Activated CD4-positive, alpha-beta T cell treated with anti-CD3 and anti-CD28 coated beads, Interleukin-2, amount 10 ng/mL, durations not matched to agents 24 days and 14 days (primary cell): ENCODE measurements at regions of chr2 and their contacts with region 1.

Region 1: GRCh38 chr2:101387151-101387807 is at the start of gene CREG2:
- DNase-seq: peak; percentile 90
- H3K4me3 Mint-ChIP-seq: peak within 1 kb of the TSS; percentile 71
- H3K27ac Mint-ChIP-seq: no peak within 1 kb of the TSS
- H3K4me1 Mint-ChIP-seq: peaks cover 5% of the 10 kb centered on the region
- H3K27me3 Mint-ChIP-seq: peaks cover 73% of the 10 kb centered on the region
- total RNA-seq, gene CREG2: not detected in 2 replicates

Region 2: GRCh38 chr2:101341901-101342624 is 45.2 kb before region 1 on chr2:
- intact Hi-C with region 1: loop called (anchors 5 kb)
- DNase-seq: peak; percentile 91
- H3K4me3 Mint-ChIP-seq: no peak overlapping the region
- H3K27ac Mint-ChIP-seq: peak overlapping the region; percentile 52
- H3K4me1 Mint-ChIP-seq: peaks cover 26% of the 10 kb centered on the region
- H3K27me3 Mint-ChIP-seq: peaks cover 5% of the 10 kb centered on the region

Region 3: GRCh38 chr2:101356521-101356920 is 30.8 kb before region 1 on chr2:
- intact Hi-C with region 1: no loop called
- DNase-seq: no peak
- H3K4me3 Mint-ChIP-seq: no peak overlapping the region
- H3K27ac Mint-ChIP-seq: no peak overlapping the region
- H3K4me1 Mint-ChIP-seq: peaks cover 15% of the 10 kb centered on the region
- H3K27me3 Mint-ChIP-seq: peaks cover 5% of the 10 kb centered on the region

Region 4: DNA sequence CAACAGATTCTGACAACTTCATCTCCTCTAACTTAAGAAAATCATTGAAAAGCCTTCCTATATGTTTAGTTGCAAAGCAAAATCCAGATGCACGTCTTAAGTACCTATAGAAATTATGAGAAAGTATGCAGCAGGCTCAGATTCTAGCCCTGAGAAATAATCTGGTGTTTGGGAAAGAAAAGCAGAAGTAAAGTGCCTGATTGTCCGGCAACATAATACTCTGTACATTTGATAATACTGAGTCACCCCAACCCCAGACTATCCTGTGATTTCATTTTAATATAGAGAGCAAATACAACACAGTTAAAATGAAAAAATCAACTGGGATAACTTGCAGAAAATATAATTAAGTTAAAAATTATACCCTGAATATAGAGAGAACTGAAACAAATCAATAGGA is 74.1 kb after region 1 on chr2:
- intact Hi-C with region 1: no loop called
- DNase-seq: no peak
- H3K4me3 Mint-ChIP-seq: no peak overlapping the region
- H3K27ac Mint-ChIP-seq: no peak overlapping the region
- H3K4me1 Mint-ChIP-seq: peaks cover 8% of the 10 kb centered on the region
- H3K27me3 Mint-ChIP-seq: no peaks in the 10 kb centered on the region